ENCODE measurements at regions of chr16 and their contacts with region 1.

Region 1: DNA sequence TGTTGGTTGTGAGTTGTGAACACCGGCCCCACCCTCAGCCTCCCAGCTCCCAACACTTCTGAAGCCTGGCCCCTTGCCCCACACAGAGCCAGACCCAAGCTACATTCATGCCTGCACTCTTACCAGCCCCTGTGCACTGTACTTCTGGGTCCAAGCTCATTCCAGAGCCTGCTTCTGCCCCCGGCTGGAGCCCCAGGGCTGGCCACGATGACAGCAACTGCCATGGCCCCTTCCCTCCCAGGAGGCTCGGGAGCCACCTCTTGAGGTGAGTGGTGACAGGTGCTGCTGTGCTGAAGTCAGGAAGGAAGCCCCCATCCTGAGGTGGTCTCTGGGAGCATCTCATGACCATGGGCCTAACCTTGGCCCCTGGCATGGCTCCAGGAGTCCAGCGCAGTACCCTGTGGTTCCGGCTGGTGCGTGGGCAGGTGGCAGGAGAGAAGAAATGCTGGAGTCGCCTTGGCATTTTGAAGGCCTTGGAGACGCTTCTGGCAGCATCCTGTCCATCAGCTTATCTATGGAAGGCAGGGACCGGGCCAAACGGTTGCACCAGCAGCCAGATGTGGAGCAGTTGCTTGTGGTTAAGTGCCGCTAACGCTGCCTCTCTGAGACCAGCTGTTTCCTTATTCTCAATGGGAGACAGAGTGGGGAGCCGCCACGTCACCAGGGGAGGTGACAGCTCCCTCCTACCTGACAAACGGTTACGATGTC is 3.9 kb upstream of the CDT1 start:
- DNase-seq: no peak
- H3K4me3 ChIP-seq: no peak overlapping the region
- H3K27ac ChIP-seq: no peak overlapping the region
- H3K4me1 ChIP-seq: peaks cover 0 to 7% (median 5%) of the 10 kb centered on the region in 4 experiments; a peak in 4 of 7 replicates
- H3K27me3 ChIP-seq: no peaks in the 10 kb centered on the region
- CTCF ChIP-seq: no peak
- EP300 ChIP-seq: no peak
- POLR2A ChIP-seq: no peak
- RAD21 ChIP-seq: no peak

Region 2: GRCh38 chr16:88763502-88764053 is 36.1 kb before region 1 on chr16:
- CTCF ChIA-PET with region 1: interaction called, 16 read pairs
- POLR2A ChIA-PET with region 1: interaction called, 4 read pairs
- DNase-seq: peak in 1 of 2 experiments; percentile 85
- H3K4me3 ChIP-seq: peak overlapping the region in 1 of 4 experiments; percentile 3; a peak in 1 of 8 replicates
- H3K27ac ChIP-seq: peak overlapping the region; percentile 64
- H3K4me1 ChIP-seq: peaks cover 4 to 43% (median 34%) of the 10 kb centered on the region in 4 experiments
- H3K27me3 ChIP-seq: no peaks in the 10 kb centered on the region
- CTCF ChIP-seq: peak in 1 of 3 experiments; percentile 40; a peak in 1 of 4 replicates
- EP300 ChIP-seq: no peak
- POLR2A ChIP-seq: no peak
- RAD21 ChIP-seq: no peak; a peak in 2 of 4 replicates

Region 3: GRCh38 chr16:88785106-88785924 is 14.4 kb before region 1 on chr16 and contains the start of gene PIEZO1:
- CTCF ChIA-PET with region 1: interaction called, 9 read pairs
- POLR2A ChIA-PET with region 1: interaction called, 16 read pairs
- DNase-seq: no peak
- H3K4me3 ChIP-seq: peak within 1 kb of the TSS; percentile 28 to 71 (median 50)
- H3K27ac ChIP-seq: no peak within 1 kb of the TSS
- H3K4me1 ChIP-seq: peaks cover 0 to 8% (median 4%) of the 10 kb centered on the region in 4 experiments; a peak in 5 of 7 replicates
- H3K27me3 ChIP-seq: peaks cover 0 to 6% (median 3%) of the 10 kb centered on the region in 4 experiments; a peak in 3 of 7 replicates
- CTCF ChIP-seq: peak; percentile 49 to 67 (median 55)
- EP300 ChIP-seq: no peak
- POLR2A ChIP-seq: no peak; a peak in 1 of 3 replicates
- RAD21 ChIP-seq: peak; percentile 21 to 54; a peak in 3 of 4 replicates
- total RNA-seq, gene PIEZO1: 63.6 and 67.5 TPM in 2 replicates